ENCODE measurements at regions of chr2 and their contacts with region 1.

Region 1: GRCh38 chr2:231452799-231453508 is 11.3 kb downstream of the NCL start:
- DNase-seq: no peak
- ATAC-seq: no peak
- H3K4me3 ChIP-seq: no peak overlapping the region
- H3K4me3 Mint-ChIP-seq: no peak overlapping the region
- H3K27ac ChIP-seq: no peak overlapping the region
- H3K27ac Mint-ChIP-seq: no peak overlapping the region
- H3K4me1 ChIP-seq: no peaks in the 10 kb centered on the region
- H3K4me1 Mint-ChIP-seq: peaks cover 5% of the 10 kb centered on the region
- H3K27me3 ChIP-seq: no peaks in the 10 kb centered on the region
- H3K27me3 Mint-ChIP-seq: no peaks in the 10 kb centered on the region
- CTCF ChIP-seq: no peak

Region 2: GRCh38 chr2:231227309-231228162 is 225.4 kb before region 1 on chr2:
- CTCF ChIA-PET with region 1: interaction called, 104 read pairs
- POLR2A ChIA-PET with region 1: no interaction called
- intact Hi-C with region 1: loop called (anchors 1 kb)
- DNase-seq: peak; percentile 80
- ATAC-seq: peak; percentile 77
- H3K4me3 ChIP-seq: no peak overlapping the region
- H3K4me3 Mint-ChIP-seq: no peak overlapping the region
- H3K27ac ChIP-seq: no peak overlapping the region
- H3K27ac Mint-ChIP-seq: peak overlapping the region; percentile 69
- H3K4me1 ChIP-seq: peaks cover 18 to 22% of the 10 kb centered on the region in 2 donors
- H3K4me1 Mint-ChIP-seq: peaks cover 23% of the 10 kb centered on the region
- H3K27me3 ChIP-seq: no peaks in the 10 kb centered on the region
- H3K27me3 Mint-ChIP-seq: no peaks in the 10 kb centered on the region
- CTCF ChIP-seq: peak; percentile 85

Region 3: GRCh38 chr2:231315896-231316295 is 137.1 kb before region 1 on chr2:
- CTCF ChIA-PET with region 1: no interaction called
- POLR2A ChIA-PET with region 1: no interaction called
- intact Hi-C with region 1: no loop called
- DNase-seq: peak; percentile 78
- ATAC-seq: peak; percentile 72
- H3K4me3 ChIP-seq: no peak overlapping the region
- H3K4me3 Mint-ChIP-seq: peak overlapping the region; percentile 5
- H3K27ac ChIP-seq: peak overlapping the region; percentile 56 to 57
- H3K27ac Mint-ChIP-seq: peak overlapping the region; percentile 67
- H3K4me1 ChIP-seq: peaks cover 28 to 40% of the 10 kb centered on the region in 2 donors
- H3K4me1 Mint-ChIP-seq: peaks cover 54% of the 10 kb centered on the region
- H3K27me3 ChIP-seq: no peaks in the 10 kb centered on the region
- H3K27me3 Mint-ChIP-seq: no peaks in the 10 kb centered on the region
- CTCF ChIP-seq: no peak

Region 4: DNA sequence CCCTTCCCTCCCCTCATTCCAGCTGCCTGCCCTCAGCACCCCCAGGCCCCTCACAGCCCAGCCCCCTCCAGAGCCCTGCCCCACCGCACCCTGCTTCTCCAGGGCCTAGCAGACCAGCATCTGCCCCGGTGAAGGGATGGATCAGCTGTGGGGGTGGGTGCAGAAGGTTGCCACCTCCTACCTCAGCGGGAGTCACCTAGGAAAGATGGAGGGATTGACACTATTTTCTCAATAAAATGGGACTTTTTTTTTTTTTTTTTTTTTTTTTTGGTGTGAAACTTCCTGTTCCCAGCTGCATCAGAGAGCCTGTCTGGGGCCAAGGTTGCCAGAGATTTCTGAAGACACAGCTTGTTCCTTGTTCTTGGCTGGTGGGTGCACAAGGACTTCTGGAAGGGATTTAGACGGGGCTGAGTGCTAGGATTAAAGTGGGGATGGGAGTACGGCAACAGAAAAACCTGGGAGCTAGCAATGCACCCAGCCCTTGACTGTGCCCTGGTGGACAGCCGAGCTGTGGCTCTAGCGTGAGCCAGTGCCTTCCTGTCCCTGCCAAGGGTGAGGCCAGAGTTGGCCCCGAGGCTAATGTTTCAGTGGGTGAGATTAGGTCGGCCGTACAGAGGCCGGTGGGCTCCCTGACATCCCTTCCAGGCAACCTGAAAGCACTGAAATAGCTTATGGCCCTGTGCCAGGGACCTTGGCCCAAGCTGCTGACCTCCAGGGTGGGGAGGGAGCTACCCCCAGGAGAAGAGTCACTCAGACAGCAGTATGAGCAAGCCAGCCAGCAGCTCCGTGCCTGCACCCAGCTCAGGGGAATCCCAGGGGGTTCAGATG is 52.9 kb before region 1 on chr2:
- CTCF ChIA-PET with region 1: interaction called, 16 read pairs
- POLR2A ChIA-PET with region 1: no interaction called
- intact Hi-C with region 1: no loop called
- DNase-seq: no peak
- ATAC-seq: no peak
- H3K4me3 ChIP-seq: no peak overlapping the region
- H3K4me3 Mint-ChIP-seq: no peak overlapping the region
- H3K27ac ChIP-seq: no peak overlapping the region
- H3K27ac Mint-ChIP-seq: peak overlapping the region; percentile 56
- H3K4me1 ChIP-seq: peaks cover 7 to 13% of the 10 kb centered on the region in 2 donors
- H3K4me1 Mint-ChIP-seq: peaks cover 27% of the 10 kb centered on the region
- H3K27me3 ChIP-seq: no peaks in the 10 kb centered on the region
- H3K27me3 Mint-ChIP-seq: no peaks in the 10 kb centered on the region
- CTCF ChIP-seq: no peak

Region 5: GRCh38 chr2:231463698-231464575 is 11.0 kb after region 1 on chr2 and contains the start of gene NCL:
- CTCF ChIA-PET with region 1: interaction called, 14 read pairs
- POLR2A ChIA-PET with region 1: interaction called, 17 read pairs
- intact Hi-C with region 1: loop called (anchors 1 kb)
- DNase-seq: peak; percentile 98
- ATAC-seq: peak; percentile 51
- H3K4me3 ChIP-seq: peak within 1 kb of the TSS; percentile 62 to 97 (median 93)
- H3K4me3 Mint-ChIP-seq: peak within 1 kb of the TSS; percentile 99
- H3K27ac ChIP-seq: peak within 1 kb of the TSS; percentile 97 to 98
- H3K27ac Mint-ChIP-seq: peak within 1 kb of the TSS; percentile 100
- H3K4me1 ChIP-seq: peaks cover 29 to 33% of the 10 kb centered on the region in 2 donors
- H3K4me1 Mint-ChIP-seq: peaks cover 46% of the 10 kb centered on the region
- H3K27me3 ChIP-seq: no peaks in the 10 kb centered on the region
- H3K27me3 Mint-ChIP-seq: no peaks in the 10 kb centered on the region
- CTCF ChIP-seq: no peak
- total RNA-seq, gene NCL: 383 and 439 TPM in 2 replicates

Region 6: DNA sequence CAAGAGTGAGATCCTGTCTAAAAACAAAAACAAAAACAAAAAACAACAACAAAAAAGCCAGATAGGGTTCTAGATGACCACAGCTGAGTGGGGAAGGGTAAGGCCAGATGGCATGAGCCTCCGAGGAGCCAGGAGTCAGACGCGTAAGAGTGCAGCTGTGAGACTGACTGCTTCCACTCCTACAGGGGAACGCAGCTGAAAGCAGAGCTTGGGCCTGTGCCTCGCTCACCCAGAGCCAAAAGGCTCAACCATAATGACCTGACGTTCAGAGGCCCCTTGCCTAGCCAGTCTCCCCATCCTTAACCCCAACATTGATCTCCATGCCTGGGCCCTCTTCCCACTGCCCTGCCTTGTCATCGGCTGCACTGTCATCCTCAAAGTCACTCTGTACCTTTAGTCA is 37.8 kb after region 1 on chr2:
- CTCF ChIA-PET with region 1: no interaction called
- POLR2A ChIA-PET with region 1: no interaction called
- intact Hi-C with region 1: no loop called
- DNase-seq: no peak
- ATAC-seq: no peak
- H3K4me3 ChIP-seq: no peak overlapping the region
- H3K4me3 Mint-ChIP-seq: no peak overlapping the region
- H3K27ac ChIP-seq: no peak overlapping the region
- H3K27ac Mint-ChIP-seq: no peak overlapping the region
- H3K4me1 ChIP-seq: no peaks in the 10 kb centered on the region
- H3K4me1 Mint-ChIP-seq: no peaks in the 10 kb centered on the region
- H3K27me3 ChIP-seq: no peaks in the 10 kb centered on the region
- H3K27me3 Mint-ChIP-seq: no peaks in the 10 kb centered on the region
- CTCF ChIP-seq: no peak

Region 7: DNA sequence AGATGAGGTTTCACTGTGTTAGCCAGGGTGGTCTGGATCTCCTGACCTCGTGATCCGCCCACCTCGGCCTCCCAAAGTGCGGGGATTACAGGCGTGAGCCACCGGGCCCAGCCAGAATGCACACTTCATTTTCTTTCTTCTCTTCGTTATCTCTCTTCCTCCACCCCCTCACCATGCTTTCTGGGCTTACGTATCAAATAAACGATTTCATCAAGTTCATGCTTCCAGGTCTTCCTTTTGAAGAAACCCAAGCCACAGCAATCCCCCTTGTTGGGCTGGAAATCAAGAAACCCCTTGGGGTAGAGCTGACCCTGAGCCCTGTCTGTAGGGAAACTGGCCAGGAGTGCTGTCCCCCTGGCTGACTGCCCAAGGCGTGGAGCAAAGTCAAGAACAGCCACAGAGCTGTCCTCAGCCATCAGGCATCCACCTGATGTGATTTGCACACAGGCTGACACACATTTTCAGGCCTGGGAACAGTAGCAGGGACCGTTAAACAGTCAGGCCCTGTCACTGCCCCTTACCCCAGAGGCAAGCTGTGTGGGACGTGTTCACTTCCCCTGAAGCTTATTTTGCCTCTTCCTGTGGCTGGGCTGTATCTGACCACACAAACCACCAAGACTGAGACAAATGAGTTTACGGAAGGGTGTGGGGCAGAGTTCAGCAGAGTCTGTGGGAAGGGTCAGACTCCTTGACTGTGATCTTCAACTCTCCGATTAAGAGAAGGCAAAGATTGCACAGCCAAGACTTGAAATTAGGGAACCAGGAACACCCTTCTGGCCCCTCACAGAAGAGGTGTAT is 92.3 kb after region 1 on chr2:
- CTCF ChIA-PET with region 1: no interaction called
- POLR2A ChIA-PET with region 1: no interaction called
- intact Hi-C with region 1: no loop called
- DNase-seq: peak; percentile 65
- ATAC-seq: peak; percentile 91
- H3K4me3 ChIP-seq: peak overlapping the region in 4 of 5 experiments; percentile 22 to 37 (median 29)
- H3K4me3 Mint-ChIP-seq: peak overlapping the region; percentile 74
- H3K27ac ChIP-seq: peak overlapping the region; percentile 54 to 62
- H3K27ac Mint-ChIP-seq: peak overlapping the region; percentile 68
- H3K4me1 ChIP-seq: peaks cover 27 to 45% of the 10 kb centered on the region in 2 donors
- H3K4me1 Mint-ChIP-seq: peaks cover 34% of the 10 kb centered on the region
- H3K27me3 ChIP-seq: no peaks in the 10 kb centered on the region
- H3K27me3 Mint-ChIP-seq: no peaks in the 10 kb centered on the region
- CTCF ChIP-seq: no peak

Region 8: DNA sequence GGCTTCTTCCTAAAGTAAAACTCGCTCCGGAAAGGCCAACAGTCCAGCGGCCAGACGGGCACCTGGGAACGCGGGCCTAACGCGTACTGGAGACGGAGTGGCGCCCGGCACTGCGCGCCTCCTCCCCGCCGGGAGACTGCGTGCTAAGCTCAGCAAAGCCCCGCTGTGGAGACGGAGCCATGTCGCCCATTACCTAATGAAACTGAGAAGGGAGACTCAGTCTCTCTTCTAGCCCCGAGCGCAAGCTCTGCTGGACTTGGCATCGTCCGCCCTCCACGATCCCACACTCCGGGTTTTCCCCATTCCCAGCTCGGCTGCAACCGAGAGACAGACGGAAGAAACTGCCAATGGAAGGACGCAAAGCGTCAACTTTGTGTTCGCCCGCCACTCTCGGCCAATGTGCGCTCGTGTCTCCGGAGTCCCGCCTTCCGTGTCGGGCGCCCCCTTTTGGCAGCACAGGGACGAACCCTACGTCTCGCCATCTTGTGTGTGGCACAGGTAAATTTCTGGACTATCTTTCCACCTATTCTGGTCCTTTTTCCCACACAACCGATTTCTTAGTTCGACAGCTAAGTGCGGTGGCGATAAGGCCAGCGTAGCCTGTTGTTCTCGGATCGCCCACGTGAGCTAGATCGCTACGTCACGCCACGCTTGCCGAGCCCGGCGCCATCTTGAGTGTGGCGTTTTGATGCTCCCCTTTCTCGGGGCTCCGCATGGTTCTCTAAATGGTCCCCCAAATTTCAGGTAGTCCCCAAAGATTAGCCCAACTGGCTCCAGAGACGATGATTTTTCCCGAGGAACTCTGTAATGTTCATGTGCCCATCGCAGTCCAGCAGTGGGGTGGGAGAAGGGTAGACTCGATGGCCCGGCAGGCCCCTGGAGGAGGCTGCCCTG is 254.0 kb after region 1 on chr2:
- CTCF ChIA-PET with region 1: no interaction called
- POLR2A ChIA-PET with region 1: no interaction called
- intact Hi-C with region 1: no loop called
- DNase-seq: peak; percentile 98
- ATAC-seq: peak; percentile 48
- H3K4me3 ChIP-seq: peak overlapping the region; percentile 77 to 99 (median 89)
- H3K4me3 Mint-ChIP-seq: peak overlapping the region; percentile 99
- H3K27ac ChIP-seq: peak overlapping the region; percentile 98 to 99
- H3K27ac Mint-ChIP-seq: peak overlapping the region; percentile 100
- H3K4me1 ChIP-seq: peaks cover 20 to 38% of the 10 kb centered on the region in 2 donors
- H3K4me1 Mint-ChIP-seq: peaks cover 28% of the 10 kb centered on the region
- H3K27me3 ChIP-seq: no peaks in the 10 kb centered on the region
- H3K27me3 Mint-ChIP-seq: no peaks in the 10 kb centered on the region
- CTCF ChIP-seq: peak; percentile 96

Region 9: DNA sequence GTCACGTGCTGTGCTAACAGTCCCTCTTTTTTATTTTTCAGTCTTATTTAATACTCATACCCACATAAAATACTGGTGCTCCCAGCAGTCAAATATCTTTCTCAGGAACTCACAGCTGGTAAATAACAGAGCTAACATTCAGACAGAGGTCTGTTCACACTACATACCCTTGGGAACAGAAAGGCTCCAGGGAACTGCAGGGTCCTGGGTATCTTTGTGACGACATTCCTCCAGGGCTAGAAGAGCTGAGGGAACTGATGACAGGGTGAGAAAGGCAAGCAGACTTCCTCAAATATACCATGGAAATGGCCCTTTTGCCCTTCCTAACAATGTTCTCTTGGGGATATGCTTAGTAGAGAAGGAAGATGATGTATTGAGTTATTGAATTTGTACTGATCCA is 308.8 kb after region 1 on chr2:
- CTCF ChIA-PET with region 1: no interaction called
- POLR2A ChIA-PET with region 1: interaction called, 14 read pairs
- intact Hi-C with region 1: no loop called
- DNase-seq: no peak
- ATAC-seq: no peak
- H3K4me3 ChIP-seq: no peak overlapping the region
- H3K4me3 Mint-ChIP-seq: no peak overlapping the region
- H3K27ac ChIP-seq: no peak overlapping the region
- H3K27ac Mint-ChIP-seq: no peak overlapping the region
- H3K4me1 ChIP-seq: no peaks in the 10 kb centered on the region
- H3K4me1 Mint-ChIP-seq: peaks cover 4% of the 10 kb centered on the region
- H3K27me3 ChIP-seq: no peaks in the 10 kb centered on the region
- H3K27me3 Mint-ChIP-seq: no peaks in the 10 kb centered on the region
- CTCF ChIP-seq: no peak

Measured in B cell (primary cell).